ENCODE measurements at regions of chr6 and their contacts with region 1.

Region 1: DNA sequence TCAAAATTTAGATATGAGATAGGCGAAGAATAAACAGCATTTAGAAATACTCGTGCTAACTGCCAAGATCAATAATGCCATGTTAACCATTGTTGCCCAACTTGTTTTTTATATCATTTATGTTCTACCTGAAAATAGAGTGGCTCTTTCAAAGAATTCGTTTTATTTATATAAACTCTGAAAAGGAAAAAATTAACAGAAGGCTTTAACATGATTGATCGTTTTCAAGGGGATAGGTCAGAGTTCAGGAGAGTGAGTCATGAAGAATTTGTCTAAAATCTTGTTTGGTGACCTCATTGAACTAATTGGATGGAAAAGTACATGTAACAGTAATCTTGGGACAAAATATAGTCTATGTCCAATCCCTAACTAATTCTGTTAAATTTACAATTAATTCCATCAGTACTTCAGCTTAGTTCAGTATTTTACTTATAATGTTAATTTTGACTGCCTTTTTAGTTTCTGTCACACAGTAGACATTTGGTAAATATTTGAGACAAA is 11.1 kb upstream of the ELOVL2 start:
- DNase-seq: no peak
- ATAC-seq: no peak
- H3K4me3 ChIP-seq: no peak overlapping the region
- H3K27ac ChIP-seq: no peak overlapping the region
- H3K4me1 ChIP-seq: no peaks in the 10 kb centered on the region
- H3K27me3 ChIP-seq: peaks cover 0 to 15% (median 0%) of the 10 kb centered on the region in 9 donors
- CTCF ChIP-seq: no peak
- POLR2A ChIP-seq: no peak

Region 2: DNA sequence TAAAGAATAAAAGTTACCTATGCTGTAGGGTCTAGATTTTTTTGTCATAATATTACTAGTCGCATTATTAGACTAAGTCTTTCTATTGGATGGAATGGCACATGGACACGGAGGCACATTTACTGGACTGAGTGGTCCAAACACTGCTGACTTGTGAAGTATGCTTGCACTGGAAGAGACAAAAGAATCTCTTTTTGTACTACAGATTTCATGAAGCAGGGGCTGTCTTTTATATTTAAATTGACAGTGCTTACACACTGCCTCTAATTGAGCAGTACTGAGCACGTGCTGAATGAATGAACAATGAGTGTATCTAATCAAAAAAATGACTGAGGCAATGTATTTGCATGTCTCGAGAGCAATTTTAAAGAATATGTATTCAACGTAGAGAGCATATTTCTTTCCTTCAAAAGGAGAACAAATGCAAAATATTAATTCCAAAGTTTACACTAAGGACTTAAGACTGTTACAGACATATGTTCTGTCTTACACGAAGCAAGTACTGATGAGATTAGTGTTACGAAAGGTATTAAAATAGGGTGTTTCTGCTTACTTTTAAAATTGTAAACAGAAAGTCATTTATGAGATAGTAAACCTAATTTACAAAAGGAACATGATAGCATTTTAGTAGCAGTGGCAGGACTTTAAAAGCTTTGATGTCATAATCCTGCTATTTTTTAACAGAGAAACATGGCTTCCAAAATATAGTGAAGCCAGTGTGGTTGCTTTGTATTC is 19.4 kb before region 1 on chr6:
- intact Hi-C with region 1: loop called in 1 of 10 experiments (anchors 2 kb)
- DNase-seq: no peak
- ATAC-seq: no peak
- H3K4me3 ChIP-seq: no peak overlapping the region
- H3K27ac ChIP-seq: no peak overlapping the region
- H3K4me1 ChIP-seq: no peaks in the 10 kb centered on the region
- H3K27me3 ChIP-seq: peaks cover 0 to 39% (median 3%) of the 10 kb centered on the region in 9 donors
- CTCF ChIP-seq: no peak
- POLR2A ChIP-seq: no peak

Region 3: DNA sequence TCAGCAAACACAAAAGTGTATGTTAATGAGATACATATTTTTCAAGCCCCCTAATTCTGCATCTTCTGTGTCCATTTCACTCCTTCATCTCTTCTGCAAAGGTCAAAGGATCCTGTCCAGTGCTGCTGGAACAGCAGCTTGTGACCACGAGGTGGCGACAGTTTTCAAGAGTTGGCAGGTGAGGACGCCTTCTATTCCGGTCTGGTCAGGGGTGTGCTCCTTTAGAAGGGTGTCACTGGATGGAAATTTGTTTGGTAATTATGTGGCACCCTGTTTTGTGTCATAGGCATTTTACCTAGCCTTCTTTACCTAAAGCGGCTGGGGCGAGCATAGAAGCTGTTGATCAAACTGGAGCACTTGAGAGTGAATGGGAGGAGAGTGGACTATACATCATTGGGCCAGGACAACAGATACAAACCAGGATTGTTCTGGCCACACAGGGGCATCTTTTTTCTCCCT is 89.2 kb after region 1 on chr6:
- intact Hi-C with region 1: no loop called
- DNase-seq: peak; percentile 72 to 83 (median 74)
- ATAC-seq: peak; percentile 89 to 96 (median 92)
- H3K4me3 ChIP-seq: no peak overlapping the region
- H3K27ac ChIP-seq: no peak overlapping the region
- H3K4me1 ChIP-seq: peaks cover 0 to 18% (median 0%) of the 10 kb centered on the region in 12 donors
- H3K27me3 ChIP-seq: no peaks in the 10 kb centered on the region
- CTCF ChIP-seq: peak; percentile 78 to 96 (median 90)
- POLR2A ChIP-seq: no peak

Measured in heart left ventricle (tissue), 16 donors.